ENCODE measurements at regions of chr6 and their contacts with region 1.

Region 1: DNA sequence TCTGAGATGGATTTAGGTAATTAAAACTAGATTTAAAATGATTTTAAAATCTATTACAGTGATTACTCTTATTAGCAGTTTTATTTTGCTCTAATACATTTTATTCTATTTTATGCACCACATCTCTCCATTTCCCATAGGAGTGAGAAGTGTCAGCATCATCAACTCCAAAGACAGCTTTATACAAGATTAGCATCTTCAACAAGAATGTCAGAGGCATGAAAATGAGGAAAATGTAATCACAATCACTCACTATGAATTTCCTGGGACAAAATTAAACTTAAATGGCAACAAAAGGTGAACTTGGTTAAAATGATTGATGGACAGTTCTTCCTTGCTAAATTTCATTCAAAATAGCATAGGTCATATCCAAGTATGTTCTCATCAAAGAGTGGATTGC is 19.8 kb downstream of the HDGFL1 start:
- DNase-seq: no peak
- H3K4me3 ChIP-seq: no peak overlapping the region
- H3K27ac ChIP-seq: no peak overlapping the region
- H3K4me1 ChIP-seq: no peaks in the 10 kb centered on the region
- H3K27me3 ChIP-seq: no peaks in the 10 kb centered on the region
- CTCF ChIP-seq: no peak
- POLR2A ChIP-seq: no peak

Region 2: DNA sequence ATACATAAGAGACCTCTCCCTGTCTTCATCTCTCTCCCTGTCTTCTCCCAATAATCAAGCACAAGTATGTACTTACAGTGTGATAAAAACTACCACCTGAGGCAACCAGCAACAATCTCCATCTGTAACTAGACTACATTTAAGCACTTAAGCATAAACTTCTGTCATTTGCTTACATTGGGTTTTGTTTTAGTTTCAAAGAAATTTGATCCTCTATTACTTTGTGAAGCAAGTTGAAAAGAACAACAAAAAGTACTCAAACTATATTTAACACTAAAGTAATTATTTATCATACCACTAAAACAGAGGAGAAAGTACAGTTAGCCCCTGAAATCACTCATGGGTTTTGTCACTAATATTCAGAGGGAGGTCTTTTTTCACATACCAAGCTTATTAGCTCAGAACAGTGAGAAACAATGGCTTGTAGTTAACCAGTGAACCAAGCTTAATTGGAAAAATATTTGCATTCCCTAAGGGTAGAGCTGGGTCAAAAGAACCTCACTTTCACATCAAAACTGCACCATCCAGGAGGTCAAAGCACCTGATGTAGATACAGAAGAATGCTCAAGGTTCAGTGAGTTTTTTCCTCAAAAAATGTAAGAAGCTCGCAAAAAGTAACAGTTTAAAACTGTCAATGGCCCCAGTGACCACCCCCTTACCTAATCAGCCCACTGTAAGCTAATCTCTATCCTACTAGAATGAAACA is 1734.7 kb after region 1 on chr6:
- intact Hi-C with region 1: loop called (anchors 5 kb)
- DNase-seq: no peak
- H3K4me3 ChIP-seq: no peak overlapping the region
- H3K27ac ChIP-seq: no peak overlapping the region
- H3K4me1 ChIP-seq: no peaks in the 10 kb centered on the region
- H3K27me3 ChIP-seq: no peaks in the 10 kb centered on the region
- CTCF ChIP-seq: no peak
- POLR2A ChIP-seq: no peak